Left colon (tissue), 2 donors: ENCODE measurements at regions of chr5 and their contacts with region 1.

Region 1: GRCh38 chr5:141392429-141393198 is at the start of gene PCDHGA8:
- DNase-seq: no peak
- ATAC-seq: no peak
- total RNA-seq, gene PCDHGA8: 0.73 to 0.82 TPM

Region 2: GRCh38 chr5:141349917-141350619 is 42.5 kb before region 1 on chr5 and contains the start of gene PCDHGB1:
- intact Hi-C with region 1: loop called in 1 of 2 experiments (anchors 10 kb)
- DNase-seq: peak in 1 of 2 donors; percentile 36
- ATAC-seq: peak; percentile 71
- total RNA-seq, gene PCDHGB1: 0.79 to 1.1 TPM

Region 3: GRCh38 chr5:141771031-141771430 is 378.4 kb after region 1 on chr5:
- intact Hi-C with region 1: no loop called
- DNase-seq: no peak
- ATAC-seq: no peak